ENCODE measurements at regions of chr6 and their contacts with region 1.

Region 1: DNA sequence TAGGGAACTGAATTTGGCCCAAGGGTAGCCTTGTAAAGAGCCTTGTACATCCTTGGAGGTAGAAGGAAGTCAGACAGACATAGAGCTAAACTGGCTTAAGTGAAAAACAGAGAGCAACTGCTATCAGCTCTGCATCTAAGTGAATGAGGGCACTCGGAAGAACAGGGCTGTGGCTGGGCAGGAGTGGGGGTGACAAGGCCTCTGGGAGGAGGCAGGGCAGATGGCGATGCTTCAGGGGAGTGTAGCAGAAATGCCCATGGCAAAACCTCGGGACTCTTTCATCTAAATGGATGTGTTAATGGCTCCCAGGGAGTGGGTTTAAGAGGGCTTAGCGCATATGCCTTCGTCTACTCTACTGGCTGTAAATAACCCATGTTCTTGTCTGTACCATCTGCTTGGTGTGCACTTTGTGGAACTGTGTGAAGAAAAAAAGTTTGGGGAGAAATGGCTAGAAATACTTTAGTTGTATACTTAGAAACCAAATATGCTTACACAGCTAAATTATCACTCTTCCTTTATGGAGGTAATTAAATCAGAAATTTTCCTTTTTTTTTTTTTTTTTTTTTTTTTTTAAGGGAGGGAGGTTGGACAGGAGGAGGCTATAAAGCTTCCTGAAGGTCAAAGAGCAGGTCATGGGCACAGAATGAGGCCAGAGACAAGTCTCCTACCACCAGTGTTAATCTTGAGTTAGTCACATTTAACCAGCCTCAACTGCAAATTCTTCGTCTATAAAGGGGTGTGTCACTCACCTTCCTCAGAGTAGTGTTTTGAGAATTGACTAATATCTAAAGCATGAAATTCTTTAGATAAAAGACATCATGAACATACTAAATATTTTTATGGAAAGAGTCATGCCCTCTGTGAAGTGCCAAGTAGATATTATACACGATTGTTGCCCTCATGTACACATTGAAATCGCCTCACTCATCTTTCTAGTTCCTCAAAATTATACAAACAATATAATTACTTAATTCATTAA is 60.9 kb downstream of the FYN start:
- DNase-seq: peak in 1 of 35 experiments; percentile 38
- ATAC-seq: peak; percentile 7 to 63 (median 44)
- H3K4me3 ChIP-seq: no peak overlapping the region
- H3K4me3 Mint-ChIP-seq: peak overlapping the region; percentile 8 to 69 (median 53)
- H3K27ac ChIP-seq: peak overlapping the region; percentile 67
- H3K27ac Mint-ChIP-seq: peak overlapping the region; percentile 93 to 94
- H3K4me1 ChIP-seq: peaks cover 51 to 57% of the 10 kb centered on the region in 2 experiments
- H3K4me1 Mint-ChIP-seq: peaks cover 80 to 85% (median 82%) of the 10 kb centered on the region in 3 donors
- H3K27me3 ChIP-seq: no peaks in the 10 kb centered on the region
- H3K27me3 Mint-ChIP-seq: no peaks in the 10 kb centered on the region

Region 2: GRCh38 chr6:111683749-111684267 is 128.5 kb before region 1 on chr6:
- CTCF ChIA-PET with region 1: no interaction called
- POLR2A ChIA-PET with region 1: no interaction called
- DNase-seq: peak in 1 of 35 experiments; percentile 26
- ATAC-seq: peak in 2 of 4 experiments; percentile 31 to 38
- H3K4me3 ChIP-seq: no peak overlapping the region
- H3K4me3 Mint-ChIP-seq: peak overlapping the region; percentile 0 to 62 (median 37)
- H3K27ac ChIP-seq: peak overlapping the region; percentile 49
- H3K27ac Mint-ChIP-seq: peak overlapping the region; percentile 84 to 92
- H3K4me1 ChIP-seq: peaks cover 9 to 52% of the 10 kb centered on the region in 2 experiments
- H3K4me1 Mint-ChIP-seq: peaks cover 89 to 93% (median 89%) of the 10 kb centered on the region in 3 donors
- H3K27me3 ChIP-seq: no peaks in the 10 kb centered on the region
- H3K27me3 Mint-ChIP-seq: no peaks in the 10 kb centered on the region

Region 3: DNA sequence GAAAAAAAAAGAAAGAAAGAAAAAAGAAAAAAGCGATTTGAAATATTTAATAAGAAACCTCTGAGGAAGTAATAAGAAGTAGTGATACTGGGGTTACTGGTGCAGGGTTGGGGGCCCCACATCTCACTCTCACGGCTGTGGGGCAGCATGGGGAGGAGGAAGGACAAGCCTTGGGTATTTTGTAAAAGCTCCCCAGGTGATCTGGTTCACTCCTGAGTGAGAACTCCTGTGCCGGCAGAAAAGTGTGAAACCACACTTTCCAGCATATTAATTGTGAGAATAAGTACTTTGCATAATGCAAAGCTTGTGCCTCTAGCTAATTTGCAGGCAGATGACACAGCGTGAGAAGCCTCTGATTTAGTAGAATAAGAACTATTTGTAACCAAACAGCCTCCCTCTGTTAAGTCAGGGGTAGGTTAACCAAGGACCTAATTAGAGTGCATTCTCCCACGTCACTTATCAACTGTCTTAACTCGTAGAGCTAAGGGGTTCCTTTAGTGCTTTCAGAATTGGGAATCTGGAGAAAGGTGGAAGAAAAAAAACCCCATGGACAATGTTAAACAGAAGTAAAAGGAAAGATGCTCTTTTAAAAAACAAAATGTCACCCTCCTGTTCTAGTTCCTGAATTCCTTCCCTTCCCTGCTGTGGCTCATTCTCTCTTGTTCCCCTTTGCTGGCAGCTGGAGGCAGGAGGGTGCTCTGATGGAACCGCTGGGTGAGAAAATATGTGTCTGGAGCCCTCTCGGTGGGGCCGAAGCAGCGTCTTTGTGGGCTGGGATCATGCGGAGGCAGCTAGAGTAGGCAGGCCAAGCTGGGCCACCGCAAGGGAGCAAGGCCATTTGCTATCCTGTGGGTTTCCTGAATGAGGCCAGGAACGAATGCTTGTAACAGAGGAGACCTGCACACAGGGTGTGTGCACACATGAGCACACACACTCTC is 47.8 kb before region 1 on chr6:
- CTCF ChIA-PET with region 1: no interaction called
- POLR2A ChIA-PET with region 1: no interaction called
- DNase-seq: peak in 31 of 35 experiments; percentile 22 to 83 (median 48)
- ATAC-seq: peak in 3 of 4 experiments; percentile 16 to 32 (median 23)
- H3K4me3 ChIP-seq: peak overlapping the region in 1 of 2 donors; percentile 40
- H3K4me3 Mint-ChIP-seq: peak overlapping the region; percentile 59 to 95 (median 65)
- H3K27ac ChIP-seq: peak overlapping the region; percentile 98
- H3K27ac Mint-ChIP-seq: peak overlapping the region; percentile 97 to 99
- H3K4me1 ChIP-seq: peaks cover 88 to 91% of the 10 kb centered on the region in 2 experiments
- H3K4me1 Mint-ChIP-seq: peaks cover 98 to 100% (median 100%) of the 10 kb centered on the region in 3 donors
- H3K27me3 ChIP-seq: no peaks in the 10 kb centered on the region
- H3K27me3 Mint-ChIP-seq: no peaks in the 10 kb centered on the region

Region 4: GRCh38 chr6:111788379-111789276 is 23.7 kb before region 1 on chr6:
- CTCF ChIA-PET with region 1: no interaction called
- POLR2A ChIA-PET with region 1: interaction called in 1 of 2 experiments, 11 read pairs
- DNase-seq: no peak
- ATAC-seq: peak in 1 of 4 experiments; percentile 21
- H3K4me3 ChIP-seq: no peak overlapping the region
- H3K4me3 Mint-ChIP-seq: no peak overlapping the region
- H3K27ac ChIP-seq: peak overlapping the region; percentile 7
- H3K27ac Mint-ChIP-seq: no peak overlapping the region
- H3K4me1 ChIP-seq: peaks cover 6 to 48% of the 10 kb centered on the region in 2 experiments
- H3K4me1 Mint-ChIP-seq: peaks cover 27 to 59% (median 54%) of the 10 kb centered on the region in 3 donors
- H3K27me3 ChIP-seq: no peaks in the 10 kb centered on the region
- H3K27me3 Mint-ChIP-seq: no peaks in the 10 kb centered on the region

Region 5: DNA sequence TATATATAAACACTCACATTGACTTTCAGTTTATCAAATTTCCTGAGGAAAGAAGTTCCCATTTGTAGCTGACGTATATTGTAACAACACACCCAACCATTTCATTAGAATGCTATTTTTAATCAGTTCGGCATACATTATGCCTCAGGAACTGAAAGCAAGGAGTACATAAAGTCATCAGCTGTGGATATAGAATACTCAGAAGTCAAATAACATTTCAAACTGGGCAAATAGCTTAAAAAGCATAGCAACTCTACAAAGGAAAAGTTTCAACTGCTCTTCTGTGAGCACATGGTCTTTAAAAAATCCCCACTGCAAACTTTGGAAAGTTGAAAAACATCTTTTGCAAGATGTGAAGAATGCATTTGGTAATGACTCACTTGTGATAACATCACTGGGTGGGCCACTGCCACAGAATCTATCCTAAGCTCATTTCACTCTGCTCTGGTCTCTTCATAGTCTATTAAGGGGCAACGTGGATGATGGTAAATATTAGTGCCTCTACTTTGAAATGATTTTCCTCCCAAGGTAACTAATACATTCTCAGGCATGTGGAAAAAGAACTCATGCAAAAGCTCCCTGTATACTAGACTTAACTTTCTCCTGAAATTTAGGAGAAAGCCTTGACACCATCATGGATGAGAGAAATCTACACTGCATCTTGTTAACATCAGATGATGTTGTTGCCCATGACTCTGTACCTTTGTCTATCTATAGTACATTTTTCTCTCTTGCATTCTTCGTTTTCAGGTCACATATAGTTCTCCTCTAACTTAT is 11.7 kb after region 1 on chr6:
- CTCF ChIA-PET with region 1: interaction called, 3 to 13 read pairs
- POLR2A ChIA-PET with region 1: interaction called, 4 to 10 read pairs
- DNase-seq: peak in 1 of 35 experiments; percentile 68
- ATAC-seq: peak; percentile 64 to 90 (median 86)
- H3K4me3 ChIP-seq: no peak overlapping the region
- H3K4me3 Mint-ChIP-seq: peak overlapping the region; percentile 18 to 63 (median 62)
- H3K27ac ChIP-seq: peak overlapping the region; percentile 70
- H3K27ac Mint-ChIP-seq: peak overlapping the region; percentile 93 to 96
- H3K4me1 ChIP-seq: peaks cover 33 to 40% of the 10 kb centered on the region in 2 experiments
- H3K4me1 Mint-ChIP-seq: peaks cover 74 to 87% (median 83%) of the 10 kb centered on the region in 3 donors
- H3K27me3 ChIP-seq: no peaks in the 10 kb centered on the region
- H3K27me3 Mint-ChIP-seq: no peaks in the 10 kb centered on the region